ENCODE measurements at regions of chr14 and their contacts with region 1.

Region 1: DNA sequence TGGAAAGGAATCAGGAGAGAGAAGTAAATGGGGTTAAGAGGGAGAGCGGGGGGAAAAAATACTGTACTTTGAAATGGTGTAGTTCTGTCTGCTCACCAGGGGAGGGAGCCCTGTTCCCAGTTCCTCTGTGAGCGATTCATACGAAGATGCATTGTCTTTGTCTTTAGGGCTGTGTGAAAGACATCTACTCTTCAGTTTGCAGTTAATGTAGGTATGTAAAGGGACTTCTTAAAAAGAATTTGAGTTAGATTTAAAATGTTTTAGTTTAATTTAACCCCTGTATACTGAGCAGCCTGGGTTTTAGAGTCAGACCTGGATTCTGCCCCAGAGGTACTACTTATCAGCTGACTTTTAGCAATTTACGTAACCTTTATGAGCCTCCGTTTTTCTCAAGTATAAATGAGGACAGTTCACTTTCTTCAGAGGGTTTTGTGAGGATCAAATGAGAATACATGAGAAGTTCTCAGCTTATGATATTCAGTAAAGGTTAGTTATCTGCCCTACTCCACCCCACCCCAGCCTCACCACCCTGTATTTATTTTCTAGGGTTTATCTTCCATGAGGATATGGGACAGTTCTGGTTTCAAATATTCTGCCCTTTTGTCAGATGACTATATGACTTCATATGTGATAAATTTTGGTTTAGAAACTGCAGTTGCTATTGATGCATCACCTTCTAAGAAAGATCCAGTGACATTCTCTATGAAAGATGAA is 82.5 kb upstream of the EVL start:
- DNase-seq: peak; percentile 36
- H3K4me3 Mint-ChIP-seq: no peak overlapping the region
- H3K27ac Mint-ChIP-seq: no peak overlapping the region
- H3K4me1 Mint-ChIP-seq: peaks cover 25% of the 10 kb centered on the region
- H3K27me3 Mint-ChIP-seq: no peaks in the 10 kb centered on the region

Region 2: GRCh38 chr14:99441157-99441870 is 541.4 kb before region 1 on chr14:
- intact Hi-C with region 1: no loop called
- DNase-seq: no peak
- H3K4me3 Mint-ChIP-seq: no peak overlapping the region
- H3K27ac Mint-ChIP-seq: peak overlapping the region; percentile 37
- H3K4me1 Mint-ChIP-seq: peaks cover 25% of the 10 kb centered on the region
- H3K27me3 Mint-ChIP-seq: no peaks in the 10 kb centered on the region

Region 3: DNA sequence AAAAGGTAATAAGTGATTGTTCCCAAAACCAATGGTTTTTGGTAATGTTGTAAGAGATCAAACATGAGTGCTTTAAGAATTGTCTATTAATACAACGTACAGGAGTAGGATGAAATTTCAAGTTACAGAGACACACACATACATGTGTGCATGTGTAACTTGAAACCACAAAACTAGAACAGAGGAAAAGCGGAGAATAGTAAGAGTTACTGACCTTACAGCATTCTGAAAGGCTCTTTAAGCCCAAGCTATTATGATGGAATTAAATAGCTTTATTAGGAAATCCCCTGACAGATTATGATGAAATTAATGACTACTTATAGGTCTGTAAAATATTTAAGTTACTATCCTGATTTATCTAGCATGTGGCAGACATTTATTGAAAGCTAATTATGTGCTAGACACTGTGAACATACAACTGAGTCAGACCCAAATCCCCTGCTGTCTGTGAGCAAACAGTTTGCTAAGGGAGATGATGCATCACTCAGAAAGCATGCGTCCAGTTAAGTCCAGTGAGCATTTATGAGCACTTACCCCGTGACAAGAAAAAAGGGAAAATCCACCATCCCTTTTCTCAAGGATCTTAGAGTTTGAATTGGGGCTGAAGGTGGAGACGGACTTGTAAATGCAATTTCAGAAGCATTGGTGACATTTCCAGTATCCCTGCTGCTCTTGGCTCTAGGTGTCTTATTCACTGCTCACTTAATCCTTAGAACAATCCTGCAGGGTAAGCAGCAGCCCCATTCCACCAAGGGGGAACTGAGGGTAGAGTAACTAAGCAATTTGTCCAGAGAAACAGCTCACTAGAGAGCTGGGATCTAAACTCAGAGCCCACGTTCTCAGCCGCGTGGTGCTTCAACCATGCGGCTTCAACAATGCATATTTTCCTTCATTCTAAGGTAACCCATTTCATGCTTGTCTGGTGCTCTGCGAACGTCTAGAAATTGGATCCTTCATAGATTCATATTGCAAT is 72.1 kb before region 1 on chr14:
- intact Hi-C with region 1: no loop called
- DNase-seq: no peak
- H3K4me3 Mint-ChIP-seq: no peak overlapping the region
- H3K27ac Mint-ChIP-seq: no peak overlapping the region
- H3K4me1 Mint-ChIP-seq: no peaks in the 10 kb centered on the region
- H3K27me3 Mint-ChIP-seq: peaks cover 16% of the 10 kb centered on the region

Region 4: DNA sequence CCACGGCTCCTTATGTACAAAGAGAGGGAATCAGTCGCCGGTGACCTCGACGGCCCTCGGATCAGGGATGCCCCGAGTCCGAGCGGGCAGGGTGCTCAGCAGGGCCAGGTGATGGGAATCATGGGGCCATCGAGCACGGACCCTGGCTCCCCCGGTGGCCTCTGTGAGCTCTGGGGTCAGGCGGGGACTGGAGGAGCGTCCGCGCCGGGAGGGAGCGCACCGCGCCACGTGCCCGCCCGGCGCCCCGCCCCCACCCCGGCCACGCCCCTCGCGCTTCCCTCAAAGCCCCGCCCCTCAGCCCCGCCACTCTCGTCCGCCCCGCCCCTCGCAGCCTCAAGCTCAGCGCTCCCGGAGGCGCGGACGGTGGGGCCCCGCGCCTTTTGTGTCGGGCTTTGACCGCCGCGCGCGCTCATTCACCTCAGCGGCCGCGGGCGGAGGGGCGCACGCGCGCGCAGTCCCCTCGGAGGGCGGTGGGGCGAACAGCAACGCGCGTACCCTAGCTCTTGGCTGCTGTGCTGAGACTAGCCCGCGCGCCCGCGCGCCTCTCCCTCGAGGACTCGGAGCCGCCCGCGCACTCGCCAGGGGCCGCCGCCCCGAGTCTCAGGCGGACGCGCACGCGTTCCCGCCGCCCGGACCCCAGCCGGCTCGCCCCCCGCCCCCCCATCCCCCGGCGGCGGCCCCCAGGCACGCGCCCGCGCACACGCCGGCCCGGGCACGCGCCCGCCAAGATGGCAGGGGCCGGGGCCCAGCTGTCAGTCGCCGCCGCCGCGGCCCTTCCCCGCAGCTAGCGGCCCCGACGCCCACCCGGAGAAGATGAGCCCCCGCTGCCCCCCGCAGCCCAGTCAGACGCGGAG is 11.4 kb before region 1 on chr14:
- intact Hi-C with region 1: loop called (anchors 1 kb)
- DNase-seq: peak; percentile 68
- H3K4me3 Mint-ChIP-seq: peak overlapping the region; percentile 80
- H3K27ac Mint-ChIP-seq: no peak overlapping the region
- H3K4me1 Mint-ChIP-seq: peaks cover 13% of the 10 kb centered on the region
- H3K27me3 Mint-ChIP-seq: peaks cover 21% of the 10 kb centered on the region

Region 5: GRCh38 chr14:100049220-100049619 is 66.5 kb after region 1 on chr14:
- intact Hi-C with region 1: loop called (anchors 2 kb)
- DNase-seq: no peak
- H3K4me3 Mint-ChIP-seq: peak overlapping the region; percentile 0
- H3K27ac Mint-ChIP-seq: peak overlapping the region; percentile 69
- H3K4me1 Mint-ChIP-seq: peaks cover 39% of the 10 kb centered on the region
- H3K27me3 Mint-ChIP-seq: no peaks in the 10 kb centered on the region

Region 6: GRCh38 chr14:100108042-100108825 is 125.5 kb after region 1 on chr14:
- intact Hi-C with region 1: loop called (anchors 1 kb)
- DNase-seq: peak; percentile 74
- H3K4me3 Mint-ChIP-seq: peak overlapping the region; percentile 47
- H3K27ac Mint-ChIP-seq: peak overlapping the region; percentile 93
- H3K4me1 Mint-ChIP-seq: peaks cover 76% of the 10 kb centered on the region
- H3K27me3 Mint-ChIP-seq: no peaks in the 10 kb centered on the region

Region 7: GRCh38 chr14:100645192-100645990 is 662.7 kb after region 1 on chr14:
- intact Hi-C with region 1: loop called (anchors 10 kb)
- DNase-seq: peak; percentile 80
- H3K4me3 Mint-ChIP-seq: peak overlapping the region; percentile 13
- H3K27ac Mint-ChIP-seq: no peak overlapping the region
- H3K4me1 Mint-ChIP-seq: peaks cover 45% of the 10 kb centered on the region
- H3K27me3 Mint-ChIP-seq: peaks cover 40% of the 10 kb centered on the region

Measured in activated T-helper 1 cell treated with anti-CD3 and anti-CD28 coated beads, Interleukin-12 subunit alpha, Interleukin-12 subunit beta, Interleukin-2, Interleukin-4 antibody, amounts not matched to agents 30 ng/mL and 10 ng/mL and 1 ng/mL, durations not matched to agents 14 hours and 24 hours and 36 hours (primary cell).